ENCODE measurements at regions of chr4 and their contacts with region 1.

Region 1: GRCh38 chr4:54064295-54065111 is at the start of gene CHIC2:
- DNase-seq: peak; percentile 96
- H3K4me3 Mint-ChIP-seq: peak within 1 kb of the TSS; percentile 84
- H3K27ac Mint-ChIP-seq: peak within 1 kb of the TSS; percentile 94
- H3K4me1 Mint-ChIP-seq: peaks cover 43% of the 10 kb centered on the region
- H3K27me3 Mint-ChIP-seq: no peaks in the 10 kb centered on the region
- total RNA-seq, gene CHIC2: 7.2 to 7.6 TPM

Region 2: GRCh38 chr4:53113431-53114225 is 950.9 kb before region 1 on chr4:
- CTCF ChIA-PET with region 1: no interaction called
- intact Hi-C with region 1: loop called (anchors 5 kb)
- DNase-seq: peak; percentile 44
- H3K4me3 Mint-ChIP-seq: no peak overlapping the region
- H3K27ac Mint-ChIP-seq: peak overlapping the region; percentile 90
- H3K4me1 Mint-ChIP-seq: peaks cover 49% of the 10 kb centered on the region
- H3K27me3 Mint-ChIP-seq: no peaks in the 10 kb centered on the region

Region 3: DNA sequence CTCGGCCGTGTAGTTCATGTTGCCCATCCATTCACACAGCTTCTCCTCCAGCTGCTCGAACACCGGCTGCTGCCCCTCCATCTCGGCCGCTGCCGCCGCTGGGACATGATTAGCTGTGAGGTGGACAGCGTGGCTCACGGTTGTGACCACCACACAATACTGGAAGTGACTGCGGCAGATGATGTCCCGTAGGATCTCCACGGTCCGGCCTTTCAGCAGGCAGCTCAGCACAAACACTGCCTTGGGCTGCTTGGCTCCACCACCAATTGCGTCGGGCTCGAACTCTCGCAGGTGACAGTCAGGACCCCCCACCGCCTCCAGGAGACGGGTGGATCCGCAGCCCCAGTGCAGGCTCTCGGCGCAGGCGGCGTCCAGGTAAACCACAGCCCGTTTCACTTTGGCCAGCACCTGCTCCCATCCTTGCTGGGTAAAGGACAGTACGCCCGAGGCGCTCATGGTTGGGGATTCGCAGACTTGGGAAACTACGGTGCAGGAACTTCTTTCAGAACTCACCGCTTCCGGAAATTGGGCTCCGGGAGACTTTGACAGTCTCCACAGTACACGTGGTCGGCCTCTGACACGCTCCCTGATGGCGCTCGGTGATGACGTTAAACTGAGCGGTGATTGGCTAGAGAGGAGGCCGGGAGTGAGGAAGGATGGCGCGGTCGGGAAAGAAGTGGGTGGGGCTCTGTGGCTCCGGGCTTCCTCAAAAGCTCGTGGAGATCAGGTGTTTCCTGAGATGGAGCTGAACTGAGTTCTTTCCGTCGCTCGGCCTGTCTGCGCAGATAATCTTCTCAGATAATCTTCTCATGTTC is 698.8 kb before region 1 on chr4 and contains the start of gene SCFD2:
- CTCF ChIA-PET with region 1: no interaction called
- intact Hi-C with region 1: loop called (anchors 1 kb)
- DNase-seq: peak; percentile 99
- H3K4me3 Mint-ChIP-seq: peak within 1 kb of the TSS; percentile 96
- H3K27ac Mint-ChIP-seq: peak within 1 kb of the TSS; percentile 96
- H3K4me1 Mint-ChIP-seq: peaks cover 38% of the 10 kb centered on the region
- H3K27me3 Mint-ChIP-seq: peaks cover 3% of the 10 kb centered on the region
- total RNA-seq, gene SCFD2: 14.3 to 15.1 TPM

Region 4: GRCh38 chr4:53489279-53489889 is 575.1 kb before region 1 on chr4:
- CTCF ChIA-PET with region 1: no interaction called
- intact Hi-C with region 1: no loop called
- DNase-seq: no peak
- H3K4me3 Mint-ChIP-seq: no peak overlapping the region
- H3K27ac Mint-ChIP-seq: no peak overlapping the region
- H3K4me1 Mint-ChIP-seq: no peaks in the 10 kb centered on the region
- H3K27me3 Mint-ChIP-seq: peaks cover 13% of the 10 kb centered on the region

Region 5: DNA sequence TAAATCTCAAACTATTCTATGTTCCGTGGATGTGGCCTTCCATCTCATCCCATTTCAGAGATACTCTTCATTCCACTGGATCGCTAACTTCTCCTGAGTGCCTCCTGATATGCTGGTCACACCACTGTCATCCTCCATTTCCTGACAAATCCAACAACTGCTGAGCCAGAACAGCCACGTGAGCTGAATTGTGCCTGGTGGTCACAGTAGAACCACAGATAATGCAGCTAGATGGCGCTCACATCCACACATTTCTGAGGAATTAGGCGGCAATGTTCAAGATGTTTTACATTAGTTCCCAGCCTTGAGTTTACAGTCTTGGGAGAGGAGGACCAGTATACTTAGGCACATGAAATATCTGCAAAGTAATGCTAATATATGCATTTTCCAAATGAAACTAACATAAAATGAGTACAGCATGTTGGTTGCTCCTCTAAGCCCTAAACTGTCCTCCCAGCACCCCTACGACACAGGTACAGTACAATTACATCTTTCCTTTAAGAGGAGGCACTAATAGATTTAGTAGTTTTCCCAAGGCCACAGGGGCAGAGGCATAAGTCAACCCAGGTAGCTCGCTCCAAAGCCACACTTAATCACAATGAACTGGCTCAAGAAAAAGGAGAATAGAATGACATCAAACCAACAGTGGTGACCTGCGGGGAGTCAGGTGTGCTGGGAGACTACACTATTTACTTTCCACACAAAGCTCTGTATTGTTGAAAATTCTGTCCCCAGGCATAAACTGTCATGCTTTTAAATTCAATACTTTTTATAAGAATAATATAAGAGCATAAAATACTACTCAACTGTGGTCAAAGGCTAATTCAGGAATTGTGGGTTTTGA is 134.3 kb before region 1 on chr4:
- CTCF ChIA-PET with region 1: interaction called, 4 read pairs
- intact Hi-C with region 1: loop called (anchors 2 kb)
- DNase-seq: peak; percentile 83
- H3K4me3 Mint-ChIP-seq: no peak overlapping the region
- H3K27ac Mint-ChIP-seq: no peak overlapping the region
- H3K4me1 Mint-ChIP-seq: no peaks in the 10 kb centered on the region
- H3K27me3 Mint-ChIP-seq: peaks cover 8% of the 10 kb centered on the region

Region 6: GRCh38 chr4:54050214-54050904 is 14.1 kb before region 1 on chr4:
- CTCF ChIA-PET with region 1: interaction called, 3 read pairs
- intact Hi-C with region 1: loop called (anchors 1 kb)
- DNase-seq: no peak
- H3K4me3 Mint-ChIP-seq: no peak overlapping the region
- H3K27ac Mint-ChIP-seq: no peak overlapping the region
- H3K4me1 Mint-ChIP-seq: peaks cover 29% of the 10 kb centered on the region
- H3K27me3 Mint-ChIP-seq: no peaks in the 10 kb centered on the region

Region 7: DNA sequence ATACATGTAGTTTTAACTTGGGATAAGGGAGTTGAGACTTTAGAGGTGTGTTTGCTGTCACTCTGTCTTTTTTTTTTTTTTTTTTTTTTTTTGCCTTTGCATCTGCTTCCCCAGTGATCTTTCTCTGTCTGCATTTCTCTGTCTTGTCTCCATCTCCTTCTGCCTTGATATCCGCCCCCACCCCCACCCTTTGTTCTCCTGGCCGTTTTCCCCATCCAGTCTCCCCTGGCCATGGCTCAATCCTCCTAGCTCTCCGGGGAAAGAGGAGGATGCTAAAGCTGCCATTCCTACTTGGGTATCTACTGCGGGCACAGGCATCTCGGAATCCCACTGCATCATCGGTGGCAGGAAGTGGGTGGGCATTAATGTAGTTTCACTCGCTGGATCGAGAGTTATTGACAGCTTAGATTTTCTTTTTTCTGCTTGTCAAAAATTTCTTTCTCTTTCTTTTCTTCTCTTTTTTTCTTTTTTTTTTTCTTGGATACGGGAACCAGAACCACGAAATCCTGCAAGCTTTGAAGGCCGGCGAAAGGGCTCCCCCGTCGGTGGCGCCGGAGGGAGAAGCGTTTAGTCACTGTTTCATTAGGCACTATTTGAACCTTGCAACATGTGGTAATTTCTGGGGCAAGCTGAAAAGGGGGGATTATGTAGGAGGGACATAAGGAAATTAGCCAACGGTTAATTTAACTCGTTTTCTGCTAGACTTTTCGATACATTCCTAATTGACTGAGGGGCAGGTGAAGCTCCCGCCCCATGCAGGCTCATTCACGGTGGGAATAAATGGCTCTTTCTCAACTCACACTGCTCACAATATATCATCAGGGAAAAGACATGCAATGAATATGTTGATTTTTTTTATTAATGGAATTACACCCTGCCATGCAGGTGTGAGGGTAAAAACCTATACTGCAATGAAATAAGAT is 43.7 kb after region 1 on chr4:
- CTCF ChIA-PET with region 1: no interaction called
- intact Hi-C with region 1: loop called (anchors 2 kb)
- DNase-seq: no peak
- H3K4me3 Mint-ChIP-seq: peak overlapping the region; percentile 52
- H3K27ac Mint-ChIP-seq: no peak overlapping the region
- H3K4me1 Mint-ChIP-seq: peaks cover 40% of the 10 kb centered on the region
- H3K27me3 Mint-ChIP-seq: peaks cover 77% of the 10 kb centered on the region

Region 8: DNA sequence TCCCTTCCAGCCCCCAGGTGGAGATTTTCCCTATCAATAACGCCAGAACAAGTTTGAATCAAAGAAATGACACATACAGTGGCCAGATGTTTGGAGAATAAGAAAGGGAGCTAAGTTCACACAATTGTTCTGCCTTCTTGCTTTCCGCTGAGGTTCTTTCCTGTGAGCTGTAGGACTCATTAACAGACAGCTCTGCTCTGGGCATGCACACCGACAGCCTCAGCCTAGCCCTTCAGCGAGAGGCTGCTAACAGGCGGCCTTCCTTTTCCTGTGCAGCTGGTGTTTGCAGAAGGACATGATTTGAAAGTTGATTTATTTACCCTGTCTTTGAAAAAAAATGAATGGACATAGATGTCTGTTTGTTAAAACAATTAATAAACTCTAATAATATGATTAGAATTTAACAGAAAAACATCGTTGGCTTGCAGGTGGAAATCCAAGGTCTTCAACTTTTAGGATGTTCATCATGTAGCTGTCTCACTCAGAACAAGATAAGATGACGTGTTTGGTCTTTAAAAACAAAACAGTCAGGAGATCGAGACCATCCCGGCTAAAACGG is 877.6 kb after region 1 on chr4:
- CTCF ChIA-PET with region 1: no interaction called
- intact Hi-C with region 1: loop called (anchors 5 kb)
- DNase-seq: peak; percentile 65
- H3K4me3 Mint-ChIP-seq: peak overlapping the region; percentile 42
- H3K27ac Mint-ChIP-seq: peak overlapping the region; percentile 69
- H3K4me1 Mint-ChIP-seq: peaks cover 55% of the 10 kb centered on the region
- H3K27me3 Mint-ChIP-seq: no peaks in the 10 kb centered on the region